ENCODE measurements at regions of chr10 and their contacts with region 1.

Region 1: GRCh38 chr10:131972474-131973071 is 9.2 kb downstream of the BNIP3 start:
- DNase-seq: peak in 1 of 2 donors; percentile 69
- H3K4me3 ChIP-seq: no peak overlapping the region
- H3K27ac ChIP-seq: no peak overlapping the region
- H3K4me1 ChIP-seq: peaks cover 0 to 8% (median 3%) of the 10 kb centered on the region in 4 donors
- H3K27me3 ChIP-seq: no peaks in the 10 kb centered on the region
- CTCF ChIP-seq: no peak

Region 2: DNA sequence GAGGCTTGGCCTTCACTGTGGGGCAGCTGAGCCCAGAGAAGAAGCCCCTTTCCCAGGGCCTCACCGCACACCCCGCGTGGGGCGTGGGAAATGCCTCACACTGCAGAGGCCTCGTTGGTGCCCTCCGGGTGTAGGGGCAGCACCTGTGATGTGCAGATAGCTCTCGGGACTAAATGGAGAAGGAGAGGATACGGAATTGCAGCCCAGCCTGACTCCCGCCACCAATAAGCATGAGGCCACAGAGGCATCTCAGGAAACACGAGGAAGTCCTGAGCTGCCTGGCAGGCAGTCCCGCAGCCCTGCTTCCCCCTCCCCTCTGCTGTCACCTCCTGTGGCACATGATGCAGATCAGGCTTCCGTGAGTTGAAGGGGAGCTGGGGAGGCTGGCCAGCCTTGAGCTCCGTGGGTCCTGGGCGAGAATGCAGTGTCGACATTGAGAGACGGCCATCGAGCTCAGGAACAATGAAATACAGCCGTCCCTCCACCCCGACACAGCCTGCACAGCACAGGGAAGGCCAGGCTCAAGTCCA is 131.4 kb before region 1 on chr10:
- intact Hi-C with region 1: no loop called
- DNase-seq: peak in 1 of 2 donors; percentile 40
- H3K4me3 ChIP-seq: no peak overlapping the region
- H3K27ac ChIP-seq: no peak overlapping the region
- H3K4me1 ChIP-seq: no peaks in the 10 kb centered on the region
- H3K27me3 ChIP-seq: peaks cover 0 to 3% of the 10 kb centered on the region in 2 donors
- CTCF ChIP-seq: no peak

Region 3: GRCh38 chr10:131911451-131911850 is 61.1 kb before region 1 on chr10:
- intact Hi-C with region 1: no loop called
- DNase-seq: peak in 1 of 2 donors; percentile 6
- H3K4me3 ChIP-seq: no peak overlapping the region
- H3K27ac ChIP-seq: no peak overlapping the region
- H3K4me1 ChIP-seq: peaks cover 0 to 4% (median 2%) of the 10 kb centered on the region in 4 donors
- H3K27me3 ChIP-seq: no peaks in the 10 kb centered on the region
- CTCF ChIP-seq: no peak

Region 4: DNA sequence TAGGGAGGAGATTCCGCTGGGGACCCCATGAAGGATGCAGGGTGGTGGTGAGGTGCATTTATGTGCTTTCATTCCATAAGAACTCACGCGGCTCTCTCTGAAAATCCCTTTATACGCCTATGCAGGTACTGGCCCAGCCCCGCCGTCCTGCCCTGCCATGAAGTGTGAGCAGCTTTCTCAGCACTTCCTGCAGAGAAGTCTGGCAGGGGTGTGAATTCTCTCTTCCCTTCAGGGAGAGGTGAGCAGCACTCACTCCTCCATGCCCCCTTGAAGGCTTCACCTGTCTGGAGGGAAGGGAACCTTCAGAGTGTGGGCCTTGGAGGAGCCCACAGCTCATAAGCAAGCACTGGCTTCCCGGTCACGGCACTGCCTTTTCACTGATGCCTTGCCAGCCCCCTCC is 37.8 kb before region 1 on chr10:
- intact Hi-C with region 1: loop called (anchors 2 kb)
- DNase-seq: no peak
- H3K4me3 ChIP-seq: no peak overlapping the region
- H3K27ac ChIP-seq: no peak overlapping the region
- H3K4me1 ChIP-seq: peaks cover 0 to 31% (median 25%) of the 10 kb centered on the region in 4 donors
- H3K27me3 ChIP-seq: no peaks in the 10 kb centered on the region
- CTCF ChIP-seq: no peak

Region 5: GRCh38 chr10:132001238-132001972 is 28.8 kb after region 1 on chr10:
- intact Hi-C with region 1: no loop called
- DNase-seq: peak in 1 of 2 donors; percentile 45
- H3K4me3 ChIP-seq: no peak overlapping the region
- H3K27ac ChIP-seq: no peak overlapping the region
- H3K4me1 ChIP-seq: peaks cover 0 to 18% (median 8%) of the 10 kb centered on the region in 4 donors
- H3K27me3 ChIP-seq: peaks cover 0 to 8% of the 10 kb centered on the region in 2 donors
- CTCF ChIP-seq: no peak